AG04450 (cell line): ENCODE measurements at regions of chr14 and their contacts with region 1.

Region 1: DNA sequence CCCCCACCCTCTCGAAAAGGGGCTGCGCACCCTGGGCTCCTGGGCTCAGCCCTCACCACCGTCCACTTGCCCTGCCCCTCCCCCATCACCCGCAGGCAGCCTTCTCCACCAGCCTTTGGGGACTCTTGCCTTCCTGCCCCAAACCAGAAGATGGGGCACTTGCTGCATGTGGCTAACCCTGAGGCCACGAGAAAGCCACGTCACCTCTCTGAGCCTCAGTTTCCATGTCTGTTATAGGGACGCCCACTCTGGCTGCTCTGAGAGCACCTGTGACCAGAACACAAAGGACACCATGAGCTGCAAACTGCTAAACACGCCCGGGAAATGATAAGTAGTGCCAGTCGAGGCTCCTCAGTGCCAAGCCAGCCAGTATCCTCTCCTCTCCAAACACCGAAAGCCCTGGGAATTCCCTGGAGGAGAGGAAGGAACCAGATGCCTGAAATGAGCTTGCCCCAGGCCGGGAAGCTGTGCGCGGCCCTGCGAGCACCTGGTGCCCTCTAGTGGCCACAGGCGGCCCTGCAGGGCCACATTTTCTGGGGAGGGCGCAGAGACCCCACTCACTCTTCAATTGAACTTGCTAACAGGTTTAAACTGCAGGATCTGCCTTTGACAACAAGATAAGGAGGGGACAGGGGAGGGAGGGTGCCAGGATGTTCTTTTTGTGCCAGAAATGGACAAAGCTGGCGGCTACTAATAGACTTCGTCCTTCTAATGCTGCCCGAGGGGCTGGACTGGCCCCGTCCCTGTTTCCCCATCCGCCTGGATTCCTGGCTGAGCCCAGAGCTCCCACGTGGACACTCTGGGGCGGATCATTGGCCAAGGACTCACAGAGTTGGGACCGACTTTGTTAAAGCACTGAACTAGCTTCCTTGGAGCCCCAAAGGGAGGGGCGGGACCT is 10.2 kb upstream of the SERPINA9 start:
- DNase-seq: peak; percentile 18
- H3K4me3 ChIP-seq: peak overlapping the region; percentile 23; the same call in 1 of the 2 replicates
- H3K27ac ChIP-seq: no peak overlapping the region
- H3K27me3 ChIP-seq: peaks cover 13% of the 10 kb centered on the region
- CTCF ChIP-seq: peak; percentile 100

Region 2: DNA sequence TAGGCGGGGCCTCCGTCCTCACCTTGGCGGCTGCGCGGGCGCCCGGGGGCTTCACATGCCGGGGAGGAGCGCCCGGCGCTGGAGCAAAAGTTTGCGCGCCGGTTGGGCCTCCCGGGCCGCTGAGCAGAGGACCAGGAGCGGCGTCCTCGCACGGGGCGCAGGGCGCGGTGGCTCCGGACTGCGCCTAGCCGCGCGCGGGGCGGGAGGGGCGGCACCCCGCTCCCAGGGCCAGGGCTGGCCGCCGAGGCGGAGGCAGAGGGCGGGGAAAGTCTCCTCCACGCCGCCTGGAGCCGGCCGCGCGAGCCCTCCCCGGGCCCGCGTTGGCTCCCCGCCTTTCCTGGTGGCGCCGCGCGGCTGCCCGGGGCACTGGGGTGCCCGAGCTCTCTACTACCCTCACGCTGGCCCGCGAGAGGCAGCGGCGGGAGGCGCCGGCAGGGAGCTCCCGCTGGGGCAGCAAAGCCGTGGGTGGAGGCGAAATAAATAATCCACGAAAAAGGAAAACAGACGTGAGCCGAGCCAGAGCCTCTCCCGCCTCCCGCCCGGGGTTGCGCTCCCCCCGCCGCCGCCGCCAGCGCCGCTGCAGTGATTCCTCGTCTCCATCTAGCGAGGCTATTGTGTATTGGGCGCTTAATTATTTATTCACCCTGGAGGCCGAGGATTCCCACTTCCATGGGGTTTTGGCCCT is 697.5 kb before region 1 on chr14:
- CTCF ChIA-PET with region 1: no interaction called
- POLR2A ChIA-PET with region 1: no interaction called
- DNase-seq: no peak
- H3K4me3 ChIP-seq: no peak overlapping the region
- H3K27ac ChIP-seq: no peak overlapping the region
- H3K27me3 ChIP-seq: peaks cover 18% of the 10 kb centered on the region
- CTCF ChIP-seq: no peak

Region 3: GRCh38 chr14:94180655-94181271 is 305.4 kb before region 1 on chr14:
- CTCF ChIA-PET with region 1: interaction called, 11 read pairs
- POLR2A ChIA-PET with region 1: no interaction called
- DNase-seq: no peak
- H3K4me3 ChIP-seq: no peak overlapping the region
- H3K27ac ChIP-seq: no peak overlapping the region
- H3K27me3 ChIP-seq: peaks cover 11% of the 10 kb centered on the region
- CTCF ChIP-seq: peak; percentile 70

Region 4: DNA sequence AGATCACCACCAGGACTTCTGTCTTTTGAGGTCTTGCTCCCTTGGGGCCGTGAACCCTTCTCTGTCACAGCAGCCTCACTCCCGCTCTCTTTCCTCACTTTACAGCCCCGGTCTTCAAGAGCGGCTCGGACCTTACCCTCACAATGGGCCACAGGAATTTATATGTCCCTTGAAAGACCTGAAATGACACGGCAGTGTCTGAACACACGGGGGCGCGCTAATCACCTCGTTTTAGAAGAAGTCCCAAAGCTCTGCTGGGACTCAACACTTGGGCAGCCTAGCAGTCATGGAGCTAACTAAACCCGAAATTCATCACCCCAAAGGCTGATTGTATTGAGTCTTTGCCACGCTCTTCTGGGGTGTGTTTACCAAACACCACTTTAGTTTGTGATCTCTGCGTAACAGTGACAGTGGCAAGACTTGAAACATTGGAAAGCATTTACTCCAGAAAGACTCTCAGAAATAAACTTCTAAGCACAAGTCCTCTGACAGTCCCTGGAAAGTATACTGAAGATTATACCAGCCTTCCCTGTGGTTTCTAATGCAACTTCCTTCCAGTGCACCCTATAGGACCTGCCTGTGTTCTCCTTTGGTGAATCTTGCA is 62.6 kb before region 1 on chr14:
- CTCF ChIA-PET with region 1: interaction called, 35 read pairs
- POLR2A ChIA-PET with region 1: no interaction called
- DNase-seq: no peak
- H3K4me3 ChIP-seq: 0 out of 2 replicates have a peak overlapping the region, but pooled peaks have one; percentile 10
- H3K27ac ChIP-seq: no peak overlapping the region
- H3K27me3 ChIP-seq: peaks cover 14% of the 10 kb centered on the region
- CTCF ChIP-seq: peak; percentile 73

Region 5: GRCh38 chr14:94445003-94445402 is 41.2 kb before region 1 on chr14:
- CTCF ChIA-PET with region 1: no interaction called
- POLR2A ChIA-PET with region 1: no interaction called
- DNase-seq: no peak
- H3K4me3 ChIP-seq: no peak overlapping the region
- H3K27ac ChIP-seq: no peak overlapping the region
- H3K27me3 ChIP-seq: peaks cover 2% of the 10 kb centered on the region
- CTCF ChIP-seq: no peak

Region 6: DNA sequence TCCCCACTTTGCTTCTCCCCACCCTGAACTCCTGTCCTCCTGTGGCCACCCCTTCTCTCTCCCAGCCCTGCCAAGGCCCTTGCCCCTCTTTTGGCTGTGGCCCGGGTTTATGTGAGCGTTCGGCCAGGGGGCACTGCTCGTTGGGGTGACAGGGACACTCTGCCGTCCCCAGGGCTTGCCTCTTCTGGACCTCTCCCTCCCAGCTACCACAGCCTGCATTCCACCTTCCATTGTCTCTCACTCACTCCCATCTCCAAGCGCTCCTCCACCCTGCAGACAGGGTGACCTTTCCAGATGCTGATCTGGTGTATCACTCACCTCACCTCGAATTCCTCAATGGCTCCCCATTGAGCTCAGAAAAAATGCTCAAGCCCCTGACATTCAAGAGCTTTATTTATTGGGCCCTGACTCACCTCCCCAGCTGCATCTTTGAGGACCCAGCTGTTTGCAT is 11.6 kb before region 1 on chr14:
- CTCF ChIA-PET with region 1: interaction called, 46 read pairs
- POLR2A ChIA-PET with region 1: no interaction called
- DNase-seq: no peak
- H3K4me3 ChIP-seq: no peak overlapping the region
- H3K27ac ChIP-seq: no peak overlapping the region
- H3K27me3 ChIP-seq: no peaks in the 10 kb centered on the region
- CTCF ChIP-seq: no peak

Region 7: DNA sequence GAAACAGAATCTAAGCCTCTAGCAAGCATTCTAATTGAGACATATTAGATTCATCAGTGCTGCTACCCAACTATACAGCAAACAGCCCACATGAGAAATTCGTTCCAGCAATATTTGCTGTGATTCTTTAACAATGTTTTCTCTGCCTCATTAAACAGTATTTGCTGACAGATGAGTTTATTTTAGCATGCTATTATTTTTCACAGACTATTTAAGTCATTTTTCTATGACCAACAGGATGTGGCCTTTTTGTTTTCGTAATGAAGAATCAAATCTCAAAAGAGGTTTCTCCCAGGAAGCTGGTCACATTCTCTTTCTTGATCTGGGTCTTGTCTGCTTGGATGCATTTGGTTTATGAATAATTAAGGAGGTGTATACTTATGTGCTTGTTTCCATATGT is 46.3 kb after region 1 on chr14:
- CTCF ChIA-PET with region 1: interaction called, 28 read pairs
- POLR2A ChIA-PET with region 1: no interaction called
- DNase-seq: no peak
- H3K4me3 ChIP-seq: no peak overlapping the region
- H3K27ac ChIP-seq: no peak overlapping the region
- H3K27me3 ChIP-seq: peaks cover 2% of the 10 kb centered on the region
- CTCF ChIP-seq: no peak

Region 8: DNA sequence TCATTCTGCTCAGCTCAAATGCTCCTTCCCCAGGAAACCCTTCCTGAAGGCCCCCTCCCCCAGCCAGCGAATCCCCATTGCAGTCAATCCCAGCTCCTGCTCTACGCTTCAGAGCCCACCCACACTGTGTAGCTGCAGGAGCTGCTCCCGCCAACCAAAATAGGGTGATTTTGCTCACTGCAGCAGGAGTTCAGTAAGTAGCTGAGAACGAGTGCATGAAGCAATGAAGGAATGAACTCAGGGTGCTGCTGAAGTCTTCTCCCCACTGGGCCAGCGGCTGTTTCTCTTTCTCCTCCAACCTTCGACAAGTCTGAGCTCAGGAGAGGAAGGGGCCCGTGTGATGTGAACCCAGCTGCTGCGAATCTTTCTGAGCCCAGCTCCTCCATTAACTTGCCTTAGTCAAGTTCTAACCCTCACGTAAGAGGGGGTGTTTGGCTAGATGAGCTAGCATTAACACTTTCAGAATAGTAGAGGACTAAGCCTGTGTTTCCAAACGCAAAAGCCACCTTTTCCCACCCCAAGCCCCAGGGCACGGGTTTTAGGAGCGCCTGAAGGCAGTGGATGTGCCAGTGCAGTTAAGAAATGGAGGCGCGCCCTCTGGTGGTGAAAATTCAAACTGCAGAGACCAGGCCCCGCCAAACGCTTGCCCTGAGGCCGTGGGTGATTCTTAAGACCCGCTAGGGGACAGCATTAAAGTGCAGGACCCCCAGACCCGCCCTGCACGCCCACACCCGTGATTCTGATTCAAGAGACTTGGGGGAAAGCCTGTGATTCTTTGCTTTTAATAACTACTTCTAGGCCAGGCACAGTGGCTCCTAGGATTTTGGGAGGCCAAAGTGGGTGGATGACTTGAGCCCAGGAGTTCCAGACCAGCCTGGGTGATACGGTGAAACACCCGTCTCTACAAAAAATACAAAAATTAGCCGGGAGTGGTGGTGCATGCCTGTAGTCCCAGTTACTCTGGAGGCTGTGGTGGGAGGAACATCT is 63.1 kb after region 1 on chr14:
- CTCF ChIA-PET with region 1: interaction called, 15 read pairs
- POLR2A ChIA-PET with region 1: no interaction called
- DNase-seq: peak; percentile 6
- H3K4me3 ChIP-seq: no peak overlapping the region
- H3K27ac ChIP-seq: no peak overlapping the region
- H3K27me3 ChIP-seq: peaks cover 2% of the 10 kb centered on the region
- CTCF ChIP-seq: peak; percentile 90